Left ventricle myocardium inferior (tissue), 1 donor: ENCODE measurements at regions of chr18 and their contacts with region 1.

Region 1: GRCh38 chr18:74353169-74353775 is 37.6 kb downstream of the C18orf63 start:
- DNase-seq: peak; percentile 38
- H3K4me3 ChIP-seq: no peak overlapping the region
- H3K27ac ChIP-seq: no peak overlapping the region
- H3K4me1 ChIP-seq: no peaks in the 10 kb centered on the region
- H3K27me3 ChIP-seq: no peaks in the 10 kb centered on the region
- CTCF ChIP-seq: peak; percentile 89

Region 2: GRCh38 chr18:74204526-74205152 is 148.6 kb before region 1 on chr18:
- intact Hi-C with region 1: no loop called
- DNase-seq: no peak
- H3K4me3 ChIP-seq: no peak overlapping the region
- H3K27ac ChIP-seq: no peak overlapping the region
- H3K4me1 ChIP-seq: no peaks in the 10 kb centered on the region
- H3K27me3 ChIP-seq: no peaks in the 10 kb centered on the region
- CTCF ChIP-seq: no peak

Region 3: DNA sequence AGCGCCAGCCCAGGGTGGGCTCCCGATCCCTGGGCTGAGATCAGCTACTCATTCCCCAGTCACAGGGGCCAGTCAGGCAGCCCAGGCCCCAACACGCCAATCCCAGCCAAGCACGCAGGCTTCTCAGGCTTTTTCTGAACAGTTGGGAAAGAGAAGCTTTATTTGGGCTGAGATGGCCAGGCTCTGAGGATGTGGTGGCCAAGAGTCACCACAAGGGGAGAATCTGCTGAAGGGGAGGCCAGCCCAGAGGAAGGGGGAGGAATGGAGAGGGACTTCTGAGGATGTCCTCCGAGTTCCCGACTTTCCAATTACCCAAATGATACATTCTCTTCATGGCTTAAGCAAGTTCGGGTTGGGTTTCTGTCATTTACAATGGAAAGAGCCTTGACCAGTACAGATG is 106.6 kb after region 1 on chr18:
- intact Hi-C with region 1: no loop called
- DNase-seq: no peak
- H3K4me3 ChIP-seq: no peak overlapping the region
- H3K27ac ChIP-seq: peak overlapping the region; percentile 94
- H3K4me1 ChIP-seq: peaks cover 50% of the 10 kb centered on the region
- H3K27me3 ChIP-seq: peaks cover 14% of the 10 kb centered on the region
- CTCF ChIP-seq: peak; percentile 55

Region 4: DNA sequence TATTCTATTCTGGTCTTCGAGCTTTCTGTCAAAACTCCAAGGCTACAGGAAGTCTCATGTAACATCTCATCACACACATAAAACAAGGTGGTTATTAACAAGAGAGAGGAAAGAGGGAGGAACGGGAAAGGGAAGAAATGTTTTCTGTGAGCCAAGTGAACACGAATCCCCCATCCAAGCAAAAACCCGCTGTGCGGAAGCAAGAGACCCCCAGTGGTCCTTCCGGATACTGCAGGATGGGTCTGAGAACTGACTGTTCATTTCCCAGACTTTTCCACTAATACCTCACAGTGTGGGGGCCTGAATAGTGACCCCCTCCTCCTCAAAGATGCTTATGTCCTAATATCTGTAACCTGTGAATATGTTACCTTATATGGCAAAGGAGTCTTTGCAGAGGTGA is 122.9 kb after region 1 on chr18:
- intact Hi-C with region 1: loop called (anchors 5 kb)
- DNase-seq: peak; percentile 42
- H3K4me3 ChIP-seq: no peak overlapping the region
- H3K27ac ChIP-seq: no peak overlapping the region
- H3K4me1 ChIP-seq: peaks cover 7% of the 10 kb centered on the region
- H3K27me3 ChIP-seq: no peaks in the 10 kb centered on the region
- CTCF ChIP-seq: peak; percentile 89

Region 5: DNA sequence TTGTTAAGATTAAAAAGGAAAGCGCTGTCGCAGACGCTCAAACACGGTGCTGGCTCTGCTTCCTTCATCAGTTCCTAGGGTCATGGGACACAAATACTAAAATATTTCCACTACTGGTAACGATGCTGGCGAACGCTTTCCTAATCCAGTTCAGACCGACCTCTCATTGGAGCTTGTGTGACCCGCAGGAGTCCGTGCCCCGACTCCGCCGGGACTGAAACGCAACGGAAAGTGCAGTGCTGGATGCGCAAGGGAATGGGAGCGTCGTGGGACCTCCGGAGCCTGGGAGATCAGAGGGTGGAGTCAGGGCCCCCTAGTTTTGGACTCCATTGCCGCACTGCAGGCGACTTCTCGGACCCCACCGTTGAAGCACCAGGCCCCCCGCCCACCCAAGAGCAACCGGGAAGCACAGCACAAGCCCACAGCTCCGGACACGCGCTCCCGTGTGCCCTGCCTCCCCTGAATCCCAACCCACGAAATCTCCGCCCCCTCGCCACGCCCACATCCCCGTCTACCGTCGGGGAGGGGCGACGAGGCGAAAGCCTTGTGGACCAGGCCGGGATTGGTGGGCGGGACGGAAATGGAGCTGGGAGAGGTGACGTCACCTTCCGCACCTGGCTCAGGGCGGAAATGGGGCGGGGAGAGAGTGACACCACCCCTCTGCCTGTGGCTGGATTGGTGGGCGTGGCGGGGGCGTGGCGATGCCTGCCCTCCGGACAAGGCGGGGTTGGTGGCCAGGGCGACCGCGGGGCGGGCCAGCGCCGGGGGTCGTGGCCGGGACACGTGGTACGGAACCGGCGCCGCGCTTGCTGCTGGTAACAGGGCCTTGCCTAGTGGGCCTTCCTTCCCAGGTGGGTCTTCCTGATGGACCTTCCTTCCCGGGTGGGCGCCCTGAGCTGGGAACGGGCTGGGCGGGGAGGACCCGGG is 142.6 kb after region 1 on chr18 and contains the start of gene CNDP2:
- intact Hi-C with region 1: loop called (anchors 5 kb)
- DNase-seq: peak; percentile 100
- H3K4me3 ChIP-seq: peak within 1 kb of the TSS; percentile 87
- H3K27ac ChIP-seq: peak within 1 kb of the TSS; percentile 95
- H3K4me1 ChIP-seq: peaks cover 64% of the 10 kb centered on the region
- H3K27me3 ChIP-seq: no peaks in the 10 kb centered on the region
- CTCF ChIP-seq: no peak
- total RNA-seq, gene CNDP2: 71.0 TPM

Region 6: GRCh38 chr18:74551936-74552555 is 198.8 kb after region 1 on chr18:
- intact Hi-C with region 1: loop called (anchors 2 kb)
- DNase-seq: peak; percentile 82
- H3K4me3 ChIP-seq: no peak overlapping the region
- H3K27ac ChIP-seq: no peak overlapping the region
- H3K4me1 ChIP-seq: peaks cover 19% of the 10 kb centered on the region
- H3K27me3 ChIP-seq: no peaks in the 10 kb centered on the region
- CTCF ChIP-seq: peak; percentile 88